Activated CD8-positive, alpha-beta T cell treated with anti-CD3 and anti-CD28 coated beads, Interleukin-2, amount 10 ng/mL, durations not matched to agents 7 days and 5 days (primary cell): ENCODE measurements at regions of chr7 and their contacts with region 1.

Region 1: DNA sequence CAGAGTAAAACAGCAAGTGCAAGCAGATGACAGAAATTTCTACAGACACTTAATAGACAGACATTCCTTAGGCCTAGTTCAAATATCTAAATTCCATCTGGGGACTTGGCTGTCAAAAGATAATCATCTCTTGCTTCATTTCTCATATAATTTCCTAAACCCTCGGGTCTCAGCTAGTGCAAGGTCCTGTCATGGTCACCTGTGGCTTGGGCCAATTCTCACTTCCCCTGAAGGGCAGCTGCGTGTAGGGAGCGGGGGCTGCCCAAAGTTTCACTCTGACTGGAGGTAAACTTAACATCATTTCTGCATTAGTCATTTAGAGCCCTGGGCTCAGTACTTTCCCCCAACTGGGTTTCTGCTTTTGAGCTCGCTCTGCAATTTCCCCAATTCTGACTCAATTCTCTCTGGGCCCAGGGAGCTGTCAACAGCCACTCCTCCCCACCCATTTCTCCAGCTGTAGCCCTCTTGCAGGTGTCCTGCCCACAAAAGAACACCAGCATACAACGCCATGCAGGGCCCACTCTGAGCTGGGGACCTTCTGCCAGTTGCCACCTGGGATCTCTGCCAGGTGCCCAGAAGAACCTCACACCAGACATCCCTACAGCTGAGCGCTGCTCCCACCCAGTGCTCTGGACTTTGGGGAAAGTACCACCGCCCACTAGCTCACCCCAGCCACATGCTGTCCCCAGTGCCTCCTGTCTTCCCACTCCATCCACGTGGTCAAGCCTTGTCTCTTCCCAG is 38.0 kb downstream of the VOPP1 start:
- DNase-seq: peak; percentile 73
- ATAC-seq: peak; percentile 69
- H3K4me3 Mint-ChIP-seq: peak overlapping the region; percentile 48
- H3K27ac Mint-ChIP-seq: peak overlapping the region; percentile 86
- H3K4me1 Mint-ChIP-seq: peaks cover 76% of the 10 kb centered on the region
- H3K27me3 Mint-ChIP-seq: no peaks in the 10 kb centered on the region

Region 2: GRCh38 chr7:55365675-55366460 is 168.5 kb before region 1 on chr7:
- CTCF ChIA-PET with region 1: no interaction called
- POLR2A ChIA-PET with region 1: interaction called, 11 read pairs
- DNase-seq: peak; percentile 94
- ATAC-seq: peak; percentile 88
- H3K4me3 Mint-ChIP-seq: peak overlapping the region; percentile 92
- H3K27ac Mint-ChIP-seq: peak overlapping the region; percentile 98
- H3K4me1 Mint-ChIP-seq: peaks cover 34% of the 10 kb centered on the region
- H3K27me3 Mint-ChIP-seq: no peaks in the 10 kb centered on the region

Region 3: DNA sequence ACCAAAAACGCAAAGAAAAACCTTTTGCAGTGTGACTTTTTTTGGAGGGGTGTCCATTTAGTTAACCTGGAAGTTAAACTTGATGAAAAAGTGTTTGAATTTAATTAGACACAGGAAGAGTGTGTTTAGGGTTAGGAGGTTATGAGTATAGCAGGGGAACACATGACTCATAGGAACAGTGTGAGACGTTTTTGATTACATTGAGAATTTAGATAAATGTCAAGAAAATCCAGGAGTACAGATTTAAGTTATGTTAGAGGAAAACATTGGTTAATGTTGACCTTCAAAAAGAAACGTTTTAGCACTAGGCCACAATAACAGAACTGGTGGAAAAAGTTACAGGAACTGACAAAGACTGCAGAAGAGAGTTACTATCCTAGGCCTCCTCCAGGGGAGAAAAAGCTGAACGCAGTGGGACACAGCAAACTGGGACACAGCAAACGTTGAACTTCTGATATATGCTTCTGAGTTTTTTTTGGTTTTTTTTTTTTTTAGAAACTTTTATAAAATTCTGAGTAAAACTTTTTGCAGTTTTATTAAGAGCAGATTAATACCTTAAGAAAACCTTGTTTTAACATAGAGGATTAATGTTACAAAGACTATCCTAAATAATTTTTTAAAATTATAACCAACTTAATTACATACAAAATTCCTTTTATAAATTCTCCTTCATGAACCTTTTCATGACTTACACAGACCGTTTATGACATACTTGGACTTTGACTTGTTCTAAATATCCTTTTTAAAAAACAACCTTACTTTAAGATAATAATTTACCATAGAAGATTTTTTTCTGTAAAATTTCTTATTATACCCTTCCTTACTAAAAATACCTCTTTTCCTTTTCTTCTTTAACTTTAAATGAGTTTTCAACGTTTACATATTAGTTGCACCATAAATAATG is 147.0 kb before region 1 on chr7:
- CTCF ChIA-PET with region 1: no interaction called
- POLR2A ChIA-PET with region 1: no interaction called
- DNase-seq: no peak
- ATAC-seq: no peak
- H3K4me3 Mint-ChIP-seq: no peak overlapping the region
- H3K27ac Mint-ChIP-seq: no peak overlapping the region
- H3K4me1 Mint-ChIP-seq: no peaks in the 10 kb centered on the region
- H3K27me3 Mint-ChIP-seq: no peaks in the 10 kb centered on the region

Region 4: GRCh38 chr7:55546829-55547228 is 12.5 kb after region 1 on chr7:
- CTCF ChIA-PET with region 1: interaction called, 11 read pairs
- POLR2A ChIA-PET with region 1: interaction called, 4 read pairs
- DNase-seq: no peak
- ATAC-seq: no peak
- H3K4me3 Mint-ChIP-seq: no peak overlapping the region
- H3K27ac Mint-ChIP-seq: no peak overlapping the region
- H3K4me1 Mint-ChIP-seq: peaks cover 22% of the 10 kb centered on the region
- H3K27me3 Mint-ChIP-seq: no peaks in the 10 kb centered on the region

Region 5: GRCh38 chr7:55572378-55573233 is 38.3 kb after region 1 on chr7 and contains the start of gene VOPP1:
- CTCF ChIA-PET with region 1: interaction called, 29 read pairs
- POLR2A ChIA-PET with region 1: interaction called, 83 read pairs
- DNase-seq: peak; percentile 56
- ATAC-seq: peak; percentile 71
- H3K4me3 Mint-ChIP-seq: peak within 1 kb of the TSS; percentile 91
- H3K27ac Mint-ChIP-seq: peak within 1 kb of the TSS; percentile 89
- H3K4me1 Mint-ChIP-seq: peaks cover 66% of the 10 kb centered on the region
- H3K27me3 Mint-ChIP-seq: peaks cover 2% of the 10 kb centered on the region
- total RNA-seq, gene VOPP1: 44.5 to 45.3 TPM